ENCODE measurements at regions of chr2 and their contacts with region 1.

Region 1: GRCh38 chr2:64653349-64654062 is at the start of gene SERTAD2:
- DNase-seq: no peak
- ATAC-seq: peak; percentile 78
- H3K4me3 ChIP-seq: peak within 1 kb of the TSS; percentile 74 to 79
- H3K27ac ChIP-seq: peak within 1 kb of the TSS; percentile 80
- H3K4me1 ChIP-seq: peaks cover 51 to 68% of the 10 kb centered on the region in 2 experiments
- H3K27me3 ChIP-seq: no peaks in the 10 kb centered on the region
- CTCF ChIP-seq: no peak; a peak in 1 of 6 replicates
- POLR2A ChIP-seq: peak; percentile 75
- RAD21 ChIP-seq: 0 out of 2 replicates have a peak, but pooled peaks have one; percentile 15
- total RNA-seq, gene SERTAD2: 80.1 TPM

Region 2: DNA sequence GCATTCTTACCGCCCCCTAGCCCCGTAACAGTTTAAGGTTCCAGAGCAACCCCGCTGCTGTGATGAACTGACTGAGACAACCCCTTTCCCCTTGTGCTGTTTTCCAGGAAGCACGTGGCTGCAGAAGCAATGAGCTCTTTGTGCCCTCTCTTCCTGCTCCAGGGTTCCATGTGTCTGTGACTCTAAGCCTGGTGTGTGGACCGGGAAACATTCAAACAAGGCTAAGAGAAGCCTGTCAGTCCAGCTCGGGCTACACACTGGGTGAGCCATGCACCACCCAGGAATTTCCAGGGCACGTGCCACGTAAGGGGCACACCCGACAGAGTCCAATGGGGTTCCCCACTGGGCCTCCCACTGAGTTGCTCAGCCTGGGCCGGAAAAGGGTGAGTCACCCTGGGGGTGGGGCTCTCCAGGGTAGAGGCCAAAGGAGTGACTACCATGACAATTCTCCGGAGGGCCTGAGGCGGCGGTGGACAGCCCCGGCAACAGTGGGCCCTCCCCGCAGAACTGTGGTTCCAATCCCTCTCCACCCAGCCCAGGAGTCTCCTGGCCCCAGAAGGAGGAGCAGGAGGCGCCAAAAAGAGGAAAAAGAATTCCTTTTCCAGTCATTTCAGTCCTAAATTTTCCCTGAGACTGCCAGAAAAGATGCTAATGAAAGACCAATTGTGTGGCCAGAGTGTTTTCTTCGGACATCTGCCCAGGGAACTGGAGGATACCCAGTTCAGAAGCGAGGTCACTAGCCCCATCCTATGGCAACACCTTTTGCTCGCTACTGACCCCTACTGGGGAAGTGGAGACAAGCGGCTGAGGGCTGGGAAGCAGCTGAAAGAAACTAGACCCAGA is 177.8 kb after region 1 on chr2:
- CTCF ChIA-PET with region 1: interaction called, 10 read pairs
- POLR2A ChIA-PET with region 1: interaction called, 6 read pairs
- RAD21 ChIA-PET with region 1: no interaction called
- intact Hi-C with region 1: no loop called
- DNase-seq: peak; percentile 98
- ATAC-seq: peak; percentile 89
- H3K4me3 ChIP-seq: peak overlapping the region; percentile 21 to 44; a peak in 3 of 4 replicates
- H3K27ac ChIP-seq: peak overlapping the region; percentile 80
- H3K4me1 ChIP-seq: peaks cover 52 to 71% of the 10 kb centered on the region in 2 experiments
- H3K27me3 ChIP-seq: no peaks in the 10 kb centered on the region
- CTCF ChIP-seq: peak in 2 of 3 experiments; percentile 98 to 99; a peak in 4 of 6 replicates
- POLR2A ChIP-seq: peak; percentile 40
- RAD21 ChIP-seq: no peak

Region 3: GRCh38 chr2:64839844-64840243 is 186.3 kb after region 1 on chr2:
- CTCF ChIA-PET with region 1: interaction called, 7 read pairs
- POLR2A ChIA-PET with region 1: interaction called, 42 read pairs
- RAD21 ChIA-PET with region 1: interaction called in 1 of 2 experiments, 4 read pairs
- intact Hi-C with region 1: no loop called
- DNase-seq: peak; percentile 35
- ATAC-seq: peak; percentile 30
- H3K4me3 ChIP-seq: no peak overlapping the region
- H3K27ac ChIP-seq: peak overlapping the region; percentile 91
- H3K4me1 ChIP-seq: peaks cover 62 to 75% of the 10 kb centered on the region in 2 experiments
- H3K27me3 ChIP-seq: no peaks in the 10 kb centered on the region
- CTCF ChIP-seq: no peak
- POLR2A ChIP-seq: peak; percentile 44
- RAD21 ChIP-seq: no peak

Region 4: DNA sequence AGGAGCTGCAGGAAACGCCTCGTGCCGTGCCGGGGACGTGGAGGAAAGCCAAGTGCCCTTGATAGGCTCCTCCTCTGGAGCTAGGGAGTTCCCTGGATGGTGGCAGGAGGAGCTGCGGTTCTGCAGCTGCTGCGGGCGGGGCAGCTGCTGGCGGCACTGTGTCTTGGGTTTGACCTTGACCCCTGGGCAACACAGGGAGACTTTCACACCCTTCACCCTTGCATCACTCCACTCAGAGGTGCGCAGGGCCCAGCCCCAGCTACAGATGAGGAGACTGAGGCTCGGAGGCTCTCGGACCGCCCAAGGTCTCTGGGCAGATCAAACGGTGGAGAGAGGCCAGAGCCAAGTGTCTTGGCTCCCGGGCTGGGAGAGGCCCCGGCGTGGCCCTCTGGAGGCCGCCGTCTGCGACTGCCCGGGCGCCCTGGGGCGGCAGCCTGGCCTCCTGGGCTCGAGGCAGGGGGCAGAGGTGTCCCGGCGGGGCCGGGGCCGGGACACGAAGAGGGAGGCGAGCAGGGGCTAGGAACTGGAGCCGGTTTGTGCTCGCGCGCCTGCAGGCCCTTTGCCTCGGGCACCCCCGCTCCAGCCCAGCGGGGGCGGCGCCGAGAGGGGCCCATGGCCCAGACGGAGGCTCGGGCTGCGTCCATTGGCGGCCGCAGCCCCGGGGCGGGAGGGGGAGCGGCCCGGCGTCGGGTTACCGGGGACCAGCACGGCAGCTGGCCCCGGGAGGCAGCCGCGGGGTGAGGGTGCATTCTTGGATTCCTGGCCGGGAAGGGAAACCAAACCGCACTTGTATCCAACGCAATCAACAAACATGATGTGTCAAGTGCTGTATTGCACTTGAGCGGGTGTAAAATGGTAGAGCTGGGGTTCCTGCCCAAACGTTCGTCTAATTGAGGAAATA is 206.1 kb after region 1 on chr2:
- CTCF ChIA-PET with region 1: interaction called, 6 read pairs
- POLR2A ChIA-PET with region 1: interaction called, 13 read pairs
- RAD21 ChIA-PET with region 1: no interaction called
- intact Hi-C with region 1: no loop called
- DNase-seq: peak; percentile 63
- ATAC-seq: peak; percentile 83
- H3K4me3 ChIP-seq: peak overlapping the region; percentile 34 to 47
- H3K27ac ChIP-seq: peak overlapping the region; percentile 97
- H3K4me1 ChIP-seq: peaks cover 42 to 83% of the 10 kb centered on the region in 2 experiments
- H3K27me3 ChIP-seq: no peaks in the 10 kb centered on the region
- CTCF ChIP-seq: peak in 1 of 3 experiments; percentile 19; a peak in 1 of 6 replicates
- POLR2A ChIP-seq: peak; percentile 46
- RAD21 ChIP-seq: no peak

Region 5: DNA sequence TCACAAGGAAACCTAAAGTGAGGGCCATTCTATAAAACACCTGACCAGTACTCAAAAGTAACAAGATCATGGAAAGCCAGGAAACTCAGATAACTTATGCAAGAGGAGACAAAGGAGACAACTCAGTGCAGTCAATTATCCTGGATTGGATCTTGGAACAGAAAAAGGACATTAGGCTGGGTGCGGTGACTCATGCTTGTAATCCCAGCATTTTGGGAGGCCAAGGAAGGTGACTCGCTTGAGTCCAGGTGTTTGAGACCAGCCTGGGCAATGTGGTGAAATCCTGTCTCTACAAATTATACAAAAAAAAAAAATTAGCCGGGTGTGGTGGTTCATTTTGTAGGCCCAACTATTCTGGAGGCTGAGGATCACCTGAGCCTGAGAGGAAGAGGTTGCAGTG is 1203.4 kb after region 1 on chr2:
- CTCF ChIA-PET with region 1: no interaction called
- POLR2A ChIA-PET with region 1: no interaction called
- RAD21 ChIA-PET with region 1: no interaction called
- intact Hi-C with region 1: no loop called
- DNase-seq: no peak
- ATAC-seq: no peak
- H3K4me3 ChIP-seq: no peak overlapping the region
- H3K27ac ChIP-seq: no peak overlapping the region
- H3K4me1 ChIP-seq: no peaks in the 10 kb centered on the region
- H3K27me3 ChIP-seq: peaks cover 29% of the 10 kb centered on the region; the same call in 1 of the 2 replicates
- CTCF ChIP-seq: no peak
- POLR2A ChIP-seq: no peak
- RAD21 ChIP-seq: no peak

Measured in HCT116 (cell line).